AG04449 (cell line): ENCODE measurements at regions of chr19 and their contacts with region 1.

Region 1: DNA sequence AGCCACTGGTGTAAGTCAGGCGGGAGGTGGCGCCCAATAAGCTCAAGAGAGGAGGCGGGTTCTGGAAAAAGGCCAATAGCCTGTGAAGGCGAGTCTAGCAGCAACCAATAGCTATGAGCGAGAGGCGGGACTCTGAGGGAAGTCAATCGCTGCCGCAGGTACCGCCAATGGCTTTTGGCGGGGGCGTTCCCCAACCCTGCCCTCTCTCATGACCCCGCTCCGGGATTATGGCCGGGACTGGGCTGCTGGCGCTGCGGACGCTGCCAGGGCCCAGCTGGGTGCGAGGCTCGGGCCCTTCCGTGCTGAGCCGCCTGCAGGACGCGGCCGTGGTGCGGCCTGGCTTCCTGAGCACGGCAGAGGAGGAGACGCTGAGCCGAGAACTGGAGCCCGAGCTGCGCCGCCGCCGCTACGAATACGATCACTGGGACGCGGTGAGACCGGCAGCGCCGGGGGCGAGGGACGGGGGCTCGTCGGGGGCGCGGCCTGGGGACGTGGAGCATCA is at the start of gene ALKBH7:
- DNase-seq: peak; percentile 99
- H3K4me3 ChIP-seq: peak within 1 kb of the TSS; percentile 85
- CTCF ChIP-seq: no peak

Region 2: DNA sequence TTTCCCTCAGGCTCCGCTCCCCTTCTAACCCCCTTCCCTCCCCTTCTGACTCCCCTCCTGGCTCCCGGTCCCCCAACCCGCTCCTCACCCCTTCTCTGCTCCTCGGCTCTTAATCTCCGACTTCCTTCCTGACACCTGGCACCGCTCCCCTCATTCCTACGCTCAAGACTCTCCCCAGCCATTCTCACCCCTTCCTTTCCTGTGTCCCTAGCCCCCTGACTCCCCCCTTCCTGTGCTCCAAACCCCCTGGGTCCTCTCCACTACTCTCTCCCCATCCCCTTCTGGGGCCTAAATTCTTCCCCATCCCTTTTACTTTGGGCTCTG is 10.7 kb before region 1 on chr19:
- CTCF ChIA-PET with region 1: interaction called, 4 read pairs
- POLR2A ChIA-PET with region 1: interaction called, 17 read pairs
- DNase-seq: no peak
- H3K4me3 ChIP-seq: peak overlapping the region; percentile 77
- CTCF ChIP-seq: no peak

Region 3: DNA sequence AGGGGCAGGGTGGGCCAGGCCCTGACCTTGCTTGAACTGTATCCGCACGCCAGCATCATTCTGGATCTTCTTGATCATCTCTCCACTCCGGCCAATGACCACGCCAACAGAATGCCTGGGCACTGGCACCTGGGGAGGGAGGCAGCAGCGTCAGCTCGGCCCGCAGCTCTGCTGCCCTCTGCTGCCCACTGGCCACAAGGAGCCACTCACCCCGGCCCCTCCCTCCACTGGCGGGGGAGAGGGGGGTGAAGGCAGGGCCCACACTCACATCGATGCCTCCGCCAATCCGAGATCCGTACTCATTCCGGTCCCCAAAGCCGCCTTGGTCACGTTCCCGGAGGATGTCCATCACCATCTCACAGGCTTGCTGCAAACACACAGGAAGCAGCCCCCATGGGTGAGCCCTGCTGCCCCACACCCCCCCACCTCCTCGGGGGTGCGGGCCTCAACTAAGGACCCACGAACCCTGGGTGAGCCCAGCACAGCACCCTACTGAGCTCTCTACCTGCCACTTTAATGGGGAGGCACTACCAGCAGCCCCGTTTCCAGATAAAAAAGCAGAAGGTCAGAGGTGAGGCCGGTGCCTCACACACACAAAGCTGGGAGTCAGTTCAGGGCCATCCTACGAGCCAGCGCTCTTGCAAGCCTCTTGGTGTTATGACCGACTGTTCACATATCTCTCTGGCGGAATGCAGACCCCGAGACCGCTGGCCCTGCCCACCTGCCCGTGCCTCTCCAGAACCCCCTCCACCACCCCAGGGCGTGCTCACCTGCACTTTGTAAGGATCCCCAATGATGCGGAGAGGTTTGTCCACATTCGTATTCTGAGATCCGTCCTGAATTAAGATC is 45.3 kb after region 1 on chr19:
- CTCF ChIA-PET with region 1: no interaction called
- POLR2A ChIA-PET with region 1: no interaction called
- DNase-seq: no peak
- H3K4me3 ChIP-seq: no peak overlapping the region
- CTCF ChIP-seq: peak; percentile 54

Region 4: GRCh38 chr19:6489278-6490061 is 116.8 kb after region 1 on chr19:
- CTCF ChIA-PET with region 1: no interaction called
- POLR2A ChIA-PET with region 1: no interaction called
- DNase-seq: no peak
- H3K4me3 ChIP-seq: no peak overlapping the region
- CTCF ChIP-seq: no peak